HEK293 (cell line): ENCODE measurements at regions of chr6 and their contacts with region 1.

Region 1: GRCh38 chr6:27825025-27825793 is 87.0 kb downstream of the OR2B2 start:
- H3K4me3 ChIP-seq: peak overlapping the region; percentile 49
- H3K27ac ChIP-seq: no peak overlapping the region
- H3K4me1 ChIP-seq: no peaks in the 10 kb centered on the region
- CTCF ChIP-seq: no peak

Region 2: GRCh38 chr6:27785294-27785693 is 39.9 kb before region 1 on chr6:
- CTCF ChIA-PET with region 1: no interaction called
- POLR2A ChIA-PET with region 1: no interaction called
- H3K4me3 ChIP-seq: no peak overlapping the region
- H3K27ac ChIP-seq: no peak overlapping the region
- H3K4me1 ChIP-seq: no peaks in the 10 kb centered on the region
- CTCF ChIP-seq: no peak

Region 3: GRCh38 chr6:27871924-27872638 is 46.9 kb after region 1 on chr6:
- CTCF ChIA-PET with region 1: no interaction called
- POLR2A ChIA-PET with region 1: interaction called, 10 read pairs
- H3K4me3 ChIP-seq: peak overlapping the region; percentile 41
- H3K27ac ChIP-seq: 0 out of 2 replicates have a peak overlapping the region, but pooled peaks have one; percentile 13
- H3K4me1 ChIP-seq: no peaks in the 10 kb centered on the region
- CTCF ChIP-seq: no peak